ENCODE measurements at regions of chr14 and their contacts with region 1.

Region 1: GRCh38 chr14:76910371-76910890 is 84.2 kb downstream of the LRRC74A start:
- DNase-seq: no peak
- ATAC-seq: no peak
- H3K4me3 ChIP-seq: no peak overlapping the region
- H3K27ac ChIP-seq: peak overlapping the region; percentile 39 to 58; a peak in 4 of 6 replicates
- H3K4me1 ChIP-seq: peaks cover 58% of the 10 kb centered on the region
- CTCF ChIP-seq: no peak
- EP300 ChIP-seq: no peak
- POLR2A ChIP-seq: no peak
- RAD21 ChIP-seq: no peak

Region 2: DNA sequence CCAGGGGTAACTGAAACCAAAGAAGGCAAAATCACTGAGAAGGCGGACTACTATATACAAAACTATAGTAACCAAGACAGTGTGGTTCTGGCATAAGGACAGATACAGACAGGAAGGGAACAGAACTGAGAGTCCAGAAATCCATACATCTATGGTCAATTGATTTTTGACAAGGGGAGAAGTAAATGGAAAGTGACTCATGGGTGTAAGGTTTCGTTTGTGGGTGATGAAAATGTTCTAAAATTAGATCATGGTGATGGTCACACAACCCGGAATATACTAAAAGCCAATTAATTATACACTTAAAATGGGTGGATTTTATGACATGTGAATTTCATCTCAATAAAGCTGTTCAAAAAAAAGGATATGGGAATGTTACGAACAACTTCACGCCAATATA is 116.5 kb before region 1 on chr14:
- CTCF ChIA-PET with region 1: no interaction called
- POLR2A ChIA-PET with region 1: no interaction called
- DNase-seq: no peak
- ATAC-seq: no peak
- H3K4me3 ChIP-seq: no peak overlapping the region
- H3K27ac ChIP-seq: no peak overlapping the region
- H3K4me1 ChIP-seq: no peaks in the 10 kb centered on the region
- CTCF ChIP-seq: no peak
- EP300 ChIP-seq: no peak
- POLR2A ChIP-seq: no peak
- RAD21 ChIP-seq: no peak

Region 3: DNA sequence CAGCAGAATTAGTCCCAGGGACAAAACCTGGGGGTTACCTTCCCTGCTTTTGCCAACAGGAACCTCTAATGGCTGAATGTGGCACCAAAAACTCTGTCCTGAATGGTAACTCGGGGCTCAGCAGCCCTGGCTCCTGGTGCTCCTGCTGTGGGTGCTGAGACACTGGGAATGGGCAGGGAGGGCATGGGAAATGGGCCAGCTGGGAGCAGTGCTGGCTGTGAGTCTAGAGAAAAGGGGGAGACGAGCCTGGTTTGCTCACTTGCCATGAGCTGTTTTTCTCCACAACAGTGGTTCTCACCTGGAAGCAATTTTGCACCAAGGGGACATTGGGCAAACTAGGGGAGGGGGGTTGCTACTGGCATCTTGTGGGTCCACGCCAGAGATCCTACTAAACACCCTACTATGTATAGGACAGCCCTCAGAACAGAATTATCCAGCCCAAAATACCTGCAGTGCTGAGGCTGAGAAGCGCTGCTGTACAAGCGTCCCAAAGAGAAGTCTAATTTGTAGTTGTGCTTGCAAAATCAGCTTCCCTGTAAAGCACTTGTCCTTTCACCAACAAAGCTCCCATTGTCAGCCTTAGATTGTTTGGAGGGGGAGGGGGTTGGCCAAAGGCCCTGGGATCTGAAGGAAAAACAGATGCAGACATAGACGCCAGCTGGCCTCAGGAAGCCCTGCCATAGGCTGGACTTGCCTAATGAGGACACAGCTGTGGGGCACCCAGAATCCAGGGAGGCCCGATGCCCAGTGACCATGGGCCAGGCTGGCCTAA is 80.6 kb before region 1 on chr14:
- CTCF ChIA-PET with region 1: no interaction called
- POLR2A ChIA-PET with region 1: no interaction called
- DNase-seq: no peak
- ATAC-seq: no peak
- H3K4me3 ChIP-seq: no peak overlapping the region
- H3K27ac ChIP-seq: no peak overlapping the region
- H3K4me1 ChIP-seq: no peaks in the 10 kb centered on the region
- CTCF ChIP-seq: no peak
- EP300 ChIP-seq: no peak
- POLR2A ChIP-seq: no peak
- RAD21 ChIP-seq: no peak

Region 4: GRCh38 chr14:77007975-77008421 is 97.6 kb after region 1 on chr14:
- CTCF ChIA-PET with region 1: interaction called, 44 read pairs
- POLR2A ChIA-PET with region 1: no interaction called
- DNase-seq: no peak
- ATAC-seq: peak in 1 of 2 experiments; percentile 21; a peak in 1 of 6 replicates
- H3K4me3 ChIP-seq: no peak overlapping the region
- H3K27ac ChIP-seq: peak overlapping the region in 1 of 2 experiments; percentile 36; a peak in 3 of 6 replicates
- H3K4me1 ChIP-seq: peaks cover 28% of the 10 kb centered on the region
- CTCF ChIP-seq: no peak
- EP300 ChIP-seq: no peak
- POLR2A ChIP-seq: no peak
- RAD21 ChIP-seq: no peak

Region 5: GRCh38 chr14:77053046-77053841 is 142.8 kb after region 1 on chr14:
- CTCF ChIA-PET with region 1: interaction called, 43 read pairs
- POLR2A ChIA-PET with region 1: no interaction called
- DNase-seq: peak in 1 of 2 experiments; percentile 65
- ATAC-seq: peak; percentile 28 to 88; a peak in 3 of 6 replicates
- H3K4me3 ChIP-seq: no peak overlapping the region
- H3K27ac ChIP-seq: peak overlapping the region; percentile 66 to 81
- H3K4me1 ChIP-seq: peaks cover 19% of the 10 kb centered on the region
- CTCF ChIP-seq: peak; percentile 67
- EP300 ChIP-seq: no peak
- POLR2A ChIP-seq: no peak
- RAD21 ChIP-seq: peak; percentile 83 to 86

Region 6: DNA sequence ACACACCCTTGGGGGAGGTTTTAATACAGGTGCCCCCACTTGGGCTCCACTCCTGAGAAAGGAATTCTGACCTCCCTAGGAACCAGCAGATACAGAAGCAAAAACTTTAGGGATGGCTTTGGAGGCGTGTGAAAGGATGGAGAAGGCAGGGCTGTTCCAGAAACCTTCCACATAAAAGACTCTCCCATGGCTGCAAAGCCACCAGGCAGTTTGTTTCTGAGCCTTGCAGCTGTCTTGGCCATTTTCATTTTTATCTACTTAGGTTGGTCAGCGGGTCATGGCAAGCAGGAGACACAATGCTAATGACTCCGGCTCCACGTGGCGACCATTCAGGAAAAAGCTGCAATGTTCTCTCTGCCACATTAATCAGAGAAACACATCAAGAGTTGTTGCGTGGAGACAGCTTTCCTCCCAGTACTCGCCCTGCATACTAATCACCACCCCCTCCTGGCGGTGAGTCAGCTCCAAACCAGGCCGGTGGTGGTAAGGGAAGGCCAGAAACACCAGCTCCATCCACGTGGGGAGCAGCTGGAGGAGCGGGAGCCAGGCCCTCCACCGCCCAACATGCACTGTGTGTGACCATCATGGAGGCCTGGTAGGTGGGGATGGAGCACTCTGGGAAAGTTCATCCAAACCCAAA is 149.0 kb after region 1 on chr14:
- CTCF ChIA-PET with region 1: interaction called, 676 read pairs
- POLR2A ChIA-PET with region 1: no interaction called
- DNase-seq: peak; percentile 51 to 66
- ATAC-seq: peak; percentile 87 to 93
- H3K4me3 ChIP-seq: no peak overlapping the region
- H3K27ac ChIP-seq: peak overlapping the region; percentile 31 to 77; a peak in 4 of 6 replicates
- H3K4me1 ChIP-seq: peaks cover 11% of the 10 kb centered on the region; the same call in 2 of the 3 replicates
- CTCF ChIP-seq: no peak
- EP300 ChIP-seq: no peak
- POLR2A ChIP-seq: no peak
- RAD21 ChIP-seq: peak; percentile 35 to 54; a peak in 3 of 5 replicates

Measured in A549 (cell line).